Activated B cell treated with CpG ODN at 0.5 μM for 24 hours (primary cell): ENCODE measurements at regions of chr5 and their contacts with region 1.

Region 1: GRCh38 chr5:132820162-132820754 is 7.2 kb downstream of the SOWAHA start:
- DNase-seq: peak; percentile 70
- ATAC-seq: peak; percentile 89
- H3K4me3 Mint-ChIP-seq: peak overlapping the region; percentile 38
- H3K27ac Mint-ChIP-seq: no peak overlapping the region
- H3K4me1 Mint-ChIP-seq: peaks cover 12% of the 10 kb centered on the region
- H3K27me3 Mint-ChIP-seq: peaks cover 27% of the 10 kb centered on the region
- CTCF ChIP-seq: no peak

Region 2: GRCh38 chr5:132506094-132506692 is 314.1 kb before region 1 on chr5:
- CTCF ChIA-PET with region 1: interaction called, 26 read pairs
- POLR2A ChIA-PET with region 1: no interaction called
- intact Hi-C with region 1: loop called (anchors 1 kb)
- DNase-seq: no peak
- ATAC-seq: peak; percentile 52
- H3K4me3 Mint-ChIP-seq: no peak overlapping the region
- H3K27ac Mint-ChIP-seq: no peak overlapping the region
- H3K4me1 Mint-ChIP-seq: peaks cover 7% of the 10 kb centered on the region
- H3K27me3 Mint-ChIP-seq: no peaks in the 10 kb centered on the region
- CTCF ChIP-seq: no peak

Region 3: DNA sequence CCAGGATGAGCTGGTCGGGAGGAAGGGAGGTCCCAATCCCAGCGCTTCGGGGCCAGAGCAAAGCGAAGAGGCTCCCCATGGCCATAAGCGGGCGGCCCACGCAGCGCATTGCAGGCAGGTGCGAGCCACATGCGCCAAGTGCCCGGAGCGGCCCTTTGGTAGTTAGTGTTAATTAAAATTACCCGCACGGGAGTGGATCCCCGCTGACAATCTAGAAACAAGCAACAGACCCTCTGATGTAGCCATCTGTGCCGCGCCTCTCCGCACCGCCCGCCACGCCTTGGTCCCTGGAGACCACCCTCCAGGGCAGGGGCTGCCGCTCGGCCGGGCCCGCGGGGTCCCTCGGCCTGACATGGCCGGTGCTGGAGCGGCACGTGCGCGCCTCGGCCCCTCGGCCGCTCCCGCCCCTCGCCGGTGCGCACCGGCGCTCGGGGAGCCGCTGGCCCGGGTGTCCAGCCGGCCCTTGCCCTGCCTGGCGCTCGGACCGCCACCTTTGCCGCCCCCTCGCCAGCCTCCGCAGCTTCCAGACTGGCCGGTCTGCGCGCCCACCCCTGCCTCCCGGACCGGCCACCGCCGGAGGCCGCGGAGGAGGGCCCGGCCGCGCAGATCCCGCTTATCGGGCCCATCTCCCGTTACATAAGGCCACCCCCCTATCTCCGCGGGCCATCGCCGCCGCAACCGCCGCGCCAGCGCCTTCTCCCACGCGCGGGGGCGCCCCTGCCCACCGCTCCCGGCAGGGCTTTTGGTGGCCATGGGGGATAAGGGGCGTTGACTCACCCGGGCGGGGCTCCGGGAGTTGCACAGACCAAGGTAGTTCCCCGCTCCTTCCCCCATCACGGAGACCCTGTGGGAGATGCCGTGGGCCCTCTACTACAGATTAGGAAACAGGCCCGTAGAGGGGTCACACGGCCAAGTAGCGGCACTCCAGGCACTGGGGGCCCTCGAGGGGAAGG is 164.2 kb before region 1 on chr5:
- CTCF ChIA-PET with region 1: interaction called, 3 read pairs
- POLR2A ChIA-PET with region 1: interaction called, 6 read pairs
- intact Hi-C with region 1: loop called (anchors 5 kb)
- DNase-seq: peak; percentile 20
- ATAC-seq: peak; percentile 54
- H3K4me3 Mint-ChIP-seq: peak overlapping the region; percentile 60
- H3K27ac Mint-ChIP-seq: no peak overlapping the region
- H3K4me1 Mint-ChIP-seq: peaks cover 12% of the 10 kb centered on the region
- H3K27me3 Mint-ChIP-seq: peaks cover 21% of the 10 kb centered on the region
- CTCF ChIP-seq: no peak

Region 4: DNA sequence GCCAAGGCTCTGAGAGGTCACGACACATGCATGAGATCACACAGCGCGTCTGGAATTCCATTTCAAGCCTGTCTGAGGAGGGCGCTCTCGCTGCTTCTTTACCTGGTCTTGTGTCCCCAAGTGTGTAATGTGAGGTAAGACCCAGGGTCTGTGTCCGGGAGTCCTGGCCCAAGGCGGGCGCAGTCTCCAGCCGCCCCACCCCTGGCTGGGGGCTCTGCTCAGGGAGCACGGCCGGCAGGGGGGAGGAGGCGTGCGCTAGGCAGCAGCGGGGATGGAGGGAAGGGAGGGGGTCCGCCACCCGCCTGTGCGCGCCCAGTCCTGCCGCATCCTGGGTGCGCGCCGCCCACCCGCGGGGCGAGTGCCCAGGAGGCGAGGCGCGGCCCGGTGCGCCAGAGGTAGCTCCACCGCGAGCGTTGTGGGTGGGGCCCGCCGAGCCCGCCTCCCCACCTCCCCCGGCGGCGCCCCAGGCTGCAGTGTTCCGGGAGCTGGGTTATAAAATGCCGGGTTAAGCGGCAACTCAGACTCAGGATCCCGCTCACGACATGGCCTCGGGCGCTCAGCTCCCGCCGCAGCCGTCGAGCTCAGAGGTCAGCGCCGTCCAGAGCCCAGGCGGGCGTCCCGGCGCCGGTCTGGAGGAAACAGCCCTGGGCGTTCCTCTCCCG is 73.2 kb before region 1 on chr5 and contains the start of gene CCNI2:
- CTCF ChIA-PET with region 1: interaction called, 6 read pairs
- POLR2A ChIA-PET with region 1: no interaction called
- intact Hi-C with region 1: loop called (anchors 2 kb)
- DNase-seq: peak; percentile 48
- ATAC-seq: peak; percentile 81
- H3K4me3 Mint-ChIP-seq: peak within 1 kb of the TSS; percentile 73
- H3K27ac Mint-ChIP-seq: no peak within 1 kb of the TSS
- H3K4me1 Mint-ChIP-seq: peaks cover 19% of the 10 kb centered on the region
- H3K27me3 Mint-ChIP-seq: peaks cover 20% of the 10 kb centered on the region
- CTCF ChIP-seq: no peak
- total RNA-seq, gene CCNI2: 0.44 and 1.5 TPM in 2 replicates